HepG2 (cell line): ENCODE measurements at regions of chr21 and their contacts with region 1.

Region 1: DNA sequence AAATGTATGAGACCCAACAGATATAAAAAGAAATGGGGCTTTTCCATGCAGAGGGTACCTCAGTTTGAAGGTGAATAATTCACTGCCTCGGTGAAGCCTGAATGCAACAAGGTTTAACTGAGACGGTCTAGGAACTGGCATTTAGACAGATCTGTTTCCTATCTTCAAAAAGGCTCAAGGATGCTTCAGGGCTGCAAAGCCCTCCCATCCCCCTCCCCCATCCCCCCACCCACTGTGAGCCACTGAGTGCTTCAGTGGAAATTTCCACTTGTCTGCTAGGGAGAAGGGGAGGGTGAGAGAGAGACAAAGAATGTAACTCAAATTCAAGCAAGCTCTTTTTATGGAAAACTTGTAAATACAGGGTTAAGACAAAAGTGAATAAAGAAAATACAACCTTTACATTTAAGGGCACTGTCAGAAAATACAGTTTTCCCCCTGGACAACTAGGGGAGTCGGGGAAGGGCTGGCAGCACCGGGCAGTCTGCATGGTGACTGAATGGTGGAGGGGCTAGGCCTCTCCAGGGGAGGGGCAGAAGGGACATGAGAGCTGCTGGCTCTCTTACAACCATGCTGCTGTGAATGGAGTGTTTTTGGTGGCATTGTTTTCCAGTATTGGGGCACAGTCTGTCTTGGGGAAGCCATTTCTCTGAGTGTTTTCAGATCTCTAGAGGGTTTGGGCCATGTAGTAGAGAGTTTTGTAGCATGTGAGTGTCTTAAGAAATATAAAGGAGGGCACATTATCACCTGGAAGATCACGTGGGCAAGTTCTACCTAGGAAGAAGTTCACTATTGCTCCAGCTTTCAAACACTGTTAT is 56.7 kb downstream of the MRPS6 start:
- DNase-seq: peak; percentile 18
- ATAC-seq: peak; percentile 51; the same call in 2 of the 3 replicates
- H3K4me3 ChIP-seq: no peak overlapping the region
- H3K27ac ChIP-seq: no peak overlapping the region
- H3K4me1 ChIP-seq: peaks cover 27% of the 10 kb centered on the region
- H3K27me3 ChIP-seq: no peaks in the 10 kb centered on the region
- CTCF ChIP-seq: no peak
- EP300 ChIP-seq: peak in 1 of 2 experiments; percentile 20; a peak in 1 of 4 replicates
- POLR2A ChIP-seq: no peak
- RAD21 ChIP-seq: no peak

Region 2: GRCh38 chr21:34202553-34203372 is 72.7 kb after region 1 on chr21:
- CTCF ChIA-PET with region 1: interaction called, 3 read pairs
- POLR2A ChIA-PET with region 1: no interaction called
- in situ Hi-C with region 1: no loop called
- intact Hi-C with region 1: loop called (anchors 5 kb)
- DNase-seq: no peak
- ATAC-seq: peak; percentile 42
- H3K4me3 ChIP-seq: peak overlapping the region; percentile 47 to 77 (median 61); a peak in 4 of 6 replicates
- H3K27ac ChIP-seq: peak overlapping the region; percentile 70
- H3K4me1 ChIP-seq: peaks cover 52% of the 10 kb centered on the region
- H3K27me3 ChIP-seq: no peaks in the 10 kb centered on the region
- CTCF ChIP-seq: no peak
- EP300 ChIP-seq: no peak
- POLR2A ChIP-seq: no peak
- RAD21 ChIP-seq: no peak